HAP-1 (cell line): ENCODE measurements at regions of chr10 and their contacts with region 1.

Region 1: GRCh38 chr10:70761031-70761601 is 24.1 kb downstream of the TBATA start:
- DNase-seq: no peak
- H3K4me3 ChIP-seq: no peak overlapping the region
- H3K4me1 ChIP-seq: no peaks in the 10 kb centered on the region
- H3K27me3 ChIP-seq: no peaks in the 10 kb centered on the region

Region 2: DNA sequence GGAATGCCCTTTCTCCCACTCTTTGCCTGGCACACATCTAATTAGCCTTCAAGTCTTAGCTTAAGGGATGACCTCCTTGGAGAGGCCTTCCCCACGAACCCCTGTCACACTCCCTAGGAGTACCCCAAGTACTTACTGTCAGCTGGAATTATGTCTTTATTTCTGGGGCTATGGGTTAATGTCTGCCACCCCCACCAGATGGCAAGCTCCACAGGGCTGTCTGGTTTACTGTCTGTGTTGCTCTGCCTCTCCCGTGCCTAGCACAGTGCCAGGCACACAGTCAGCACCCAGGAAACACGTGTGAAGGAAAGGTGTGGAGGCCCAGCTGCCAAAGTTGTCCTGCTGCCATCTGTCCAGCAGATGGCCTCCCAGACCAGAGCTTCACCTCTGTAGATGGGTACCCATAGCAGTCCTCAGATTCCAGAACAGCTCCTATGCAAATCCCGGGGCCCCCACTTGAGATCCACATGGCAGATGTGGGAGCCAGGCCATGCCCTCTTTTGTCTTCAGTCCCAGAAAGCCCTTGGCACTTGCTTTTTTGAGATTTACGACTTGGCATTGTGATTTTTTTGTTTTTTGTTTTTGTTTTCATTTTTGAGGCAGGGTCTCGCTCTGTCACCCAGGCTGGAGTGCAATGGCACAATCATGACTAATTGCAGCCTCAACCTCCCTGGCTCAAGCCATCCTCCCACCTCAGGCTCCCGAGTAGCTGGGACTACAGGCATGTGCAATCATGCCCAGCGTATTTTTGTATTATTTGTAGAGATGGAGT is 299.7 kb before region 1 on chr10:
- in situ Hi-C with region 1: loop called (anchors 10 kb)
- DNase-seq: peak; percentile 29 to 70
- H3K4me3 ChIP-seq: no peak overlapping the region
- H3K4me1 ChIP-seq: peaks cover 10% of the 10 kb centered on the region
- H3K27me3 ChIP-seq: no peaks in the 10 kb centered on the region

Region 3: DNA sequence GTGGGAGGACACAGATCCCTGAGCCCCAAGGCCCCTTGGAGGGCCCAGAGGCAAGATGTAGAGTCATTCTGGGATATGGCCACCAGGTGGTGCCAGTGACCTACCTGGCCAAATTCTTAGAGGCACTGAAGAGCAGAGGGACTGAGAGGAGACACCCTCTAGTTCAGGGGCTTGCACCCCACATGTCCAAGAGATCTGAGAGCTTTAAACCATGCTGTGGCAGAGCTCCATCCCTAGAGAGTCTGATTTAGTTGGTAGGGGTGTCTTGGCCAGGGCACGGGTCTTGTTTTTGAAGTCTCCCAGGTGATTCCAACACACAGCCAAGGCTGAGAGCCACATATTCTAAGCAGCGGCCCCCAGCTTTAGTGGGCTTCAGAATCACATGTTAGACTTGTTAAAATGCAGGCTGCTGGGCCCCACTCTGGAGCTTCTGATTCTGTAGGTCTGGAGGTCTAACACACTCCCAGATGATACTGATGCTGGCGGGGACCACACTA is 211.1 kb before region 1 on chr10:
- in situ Hi-C with region 1: loop called (anchors 10 kb)
- DNase-seq: peak in 1 of 2 experiments; percentile 76
- H3K4me3 ChIP-seq: no peak overlapping the region
- H3K4me1 ChIP-seq: no peaks in the 10 kb centered on the region
- H3K27me3 ChIP-seq: no peaks in the 10 kb centered on the region